Transverse colon (tissue), 4 donors: ENCODE measurements at regions of chr10 and their contacts with region 1.

Region 1: DNA sequence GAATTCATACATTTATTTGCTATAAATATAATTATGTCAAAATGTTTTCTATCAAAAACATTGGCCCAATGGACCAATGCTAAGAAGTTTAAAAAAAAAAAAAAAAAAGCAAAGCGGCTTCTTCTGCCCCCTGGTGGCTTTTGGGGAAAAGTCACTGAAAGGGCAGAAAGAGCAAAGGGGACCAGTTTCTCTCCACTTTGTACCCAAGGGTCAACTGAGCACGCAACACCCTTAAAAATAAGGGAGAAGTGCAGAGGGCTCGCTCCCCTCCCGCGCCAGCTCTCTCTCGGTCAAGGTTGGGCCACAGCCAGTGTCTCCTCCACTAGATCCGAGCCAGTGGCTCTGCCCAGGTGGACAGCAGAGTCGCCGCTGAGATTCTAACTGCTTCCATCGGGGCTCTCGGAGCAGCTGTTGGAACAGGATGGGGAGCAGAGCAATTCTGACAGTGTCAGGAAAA is 136.4 kb upstream of the FGFR2 start:
- DNase-seq: no peak
- H3K4me3 ChIP-seq: no peak overlapping the region
- H3K27ac ChIP-seq: no peak overlapping the region
- H3K4me1 ChIP-seq: peaks cover 0 to 3% (median 1%) of the 10 kb centered on the region in 4 donors
- H3K27me3 ChIP-seq: peaks cover 13% of the 10 kb centered on the region
- CTCF ChIP-seq: peak; percentile 64 to 76 (median 69)
- EP300 ChIP-seq: no peak
- POLR2A ChIP-seq: no peak

Region 2: GRCh38 chr10:120931423-120931822 is 803.2 kb before region 1 on chr10:
- in situ Hi-C with region 1: loop called in 1 of 4 experiments (anchors 10 kb)
- intact Hi-C with region 1: no loop called
- DNase-seq: no peak
- H3K4me3 ChIP-seq: no peak overlapping the region
- H3K27ac ChIP-seq: no peak overlapping the region
- H3K4me1 ChIP-seq: no peaks in the 10 kb centered on the region
- H3K27me3 ChIP-seq: no peaks in the 10 kb centered on the region
- CTCF ChIP-seq: no peak
- EP300 ChIP-seq: no peak
- POLR2A ChIP-seq: no peak

Region 3: DNA sequence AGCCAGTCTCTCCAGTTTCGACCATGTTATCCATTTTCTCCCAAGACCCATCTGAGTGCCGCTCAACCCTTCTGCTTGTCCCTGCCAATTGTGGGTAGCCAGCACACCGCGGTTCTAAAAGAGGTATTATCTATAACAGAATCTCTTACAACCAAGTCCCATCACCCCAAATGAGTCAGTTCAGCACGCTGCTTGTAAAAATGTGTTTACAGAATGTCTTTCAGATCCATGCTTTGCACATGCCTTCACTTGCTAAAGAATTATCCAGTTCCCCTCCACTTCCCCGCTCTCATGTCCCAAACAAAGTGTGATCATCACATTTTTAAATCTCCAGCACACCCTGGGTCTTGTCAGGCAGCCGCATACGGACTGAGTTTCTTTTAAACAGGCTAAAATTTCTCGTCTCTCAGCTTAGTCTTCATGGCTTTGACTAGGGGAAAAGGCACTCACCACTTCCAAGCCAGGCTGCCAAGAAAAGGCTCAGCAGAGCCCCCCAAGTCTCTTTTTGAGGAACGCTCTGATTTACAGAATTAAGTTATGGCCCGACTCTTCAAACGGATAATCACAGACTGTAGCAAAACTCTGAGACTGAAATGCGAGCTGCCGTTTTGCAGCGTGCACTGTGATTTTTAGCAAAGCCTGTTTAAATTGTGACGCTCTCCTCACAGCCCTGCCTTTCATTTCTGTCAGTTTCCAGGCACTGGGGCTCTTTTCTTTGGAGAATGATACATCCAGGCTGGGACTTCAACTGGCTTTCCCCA is 106.6 kb before region 1 on chr10:
- in situ Hi-C with region 1: no loop called
- intact Hi-C with region 1: loop called (anchors 10 kb)
- DNase-seq: no peak
- H3K4me3 ChIP-seq: no peak overlapping the region
- H3K27ac ChIP-seq: peak overlapping the region in 3 of 4 donors; percentile 42 to 64 (median 63)
- H3K4me1 ChIP-seq: no peaks in the 10 kb centered on the region
- H3K27me3 ChIP-seq: no peaks in the 10 kb centered on the region
- CTCF ChIP-seq: no peak
- EP300 ChIP-seq: no peak
- POLR2A ChIP-seq: no peak